AG04450 (cell line): ENCODE measurements at regions of chr19 and their contacts with region 1.

Region 1: GRCh38 chr19:13430790-13431582 is 75.3 kb downstream of the CACNA1A start:
- DNase-seq: peak; percentile 11
- H3K4me3 ChIP-seq: no peak overlapping the region
- H3K27ac ChIP-seq: no peak overlapping the region
- H3K27me3 ChIP-seq: no peaks in the 10 kb centered on the region
- CTCF ChIP-seq: peak; percentile 84

Region 2: DNA sequence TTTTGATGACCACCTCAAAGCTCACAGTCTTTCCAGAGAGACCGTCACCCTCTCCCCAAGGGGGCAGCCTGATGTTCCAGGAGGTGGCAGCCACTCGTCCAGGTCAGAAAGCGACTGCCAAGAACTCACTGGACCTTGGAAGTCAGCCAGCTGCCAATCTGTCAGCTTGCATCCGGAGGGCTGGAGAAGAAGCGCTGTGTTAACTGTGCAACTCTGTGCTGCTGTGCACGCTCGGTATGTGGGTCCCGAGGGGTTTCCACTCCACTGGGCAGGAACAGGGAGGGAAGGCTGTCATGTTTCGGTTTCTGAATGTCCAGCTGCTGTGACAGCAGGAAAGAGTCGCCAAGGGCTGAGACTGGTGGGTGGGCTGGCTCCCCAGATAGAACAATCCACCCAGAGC is 13.9 kb before region 1 on chr19:
- CTCF ChIA-PET with region 1: interaction called, 12 read pairs
- POLR2A ChIA-PET with region 1: no interaction called
- DNase-seq: no peak
- H3K4me3 ChIP-seq: no peak overlapping the region
- H3K27ac ChIP-seq: no peak overlapping the region
- H3K27me3 ChIP-seq: no peaks in the 10 kb centered on the region
- CTCF ChIP-seq: no peak